ENCODE measurements at regions of chr12 and their contacts with region 1.

Region 1: DNA sequence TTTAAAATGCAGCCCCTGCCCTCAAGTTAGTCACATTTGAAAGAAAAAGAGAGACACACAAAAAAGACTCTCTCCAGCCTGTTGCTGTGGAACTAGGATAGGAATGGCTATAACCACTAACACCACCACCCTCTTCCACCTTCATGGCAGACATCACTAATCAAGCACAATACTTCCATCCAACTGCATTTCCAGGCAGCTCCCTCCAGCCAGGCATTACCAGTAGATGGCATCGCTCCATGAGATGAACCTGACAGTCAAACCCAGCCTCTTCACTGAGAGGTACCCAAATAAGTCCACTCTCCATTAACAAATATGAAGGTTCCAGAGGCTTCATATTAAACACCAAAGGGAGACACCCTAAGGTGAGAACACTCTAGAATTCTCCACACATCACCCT is 24.4 kb downstream of the SLC8B1 start:
- DNase-seq: no peak
- H3K4me3 Mint-ChIP-seq: no peak overlapping the region
- H3K27ac Mint-ChIP-seq: no peak overlapping the region
- H3K4me1 Mint-ChIP-seq: peaks cover 3% of the 10 kb centered on the region
- H3K27me3 Mint-ChIP-seq: no peaks in the 10 kb centered on the region

Region 2: GRCh38 chr12:113299619-113300237 is 10.8 kb before region 1 on chr12:
- intact Hi-C with region 1: no loop called
- DNase-seq: no peak
- H3K4me3 Mint-ChIP-seq: no peak overlapping the region
- H3K27ac Mint-ChIP-seq: peak overlapping the region; percentile 8
- H3K4me1 Mint-ChIP-seq: peaks cover 17% of the 10 kb centered on the region
- H3K27me3 Mint-ChIP-seq: no peaks in the 10 kb centered on the region

Region 3: DNA sequence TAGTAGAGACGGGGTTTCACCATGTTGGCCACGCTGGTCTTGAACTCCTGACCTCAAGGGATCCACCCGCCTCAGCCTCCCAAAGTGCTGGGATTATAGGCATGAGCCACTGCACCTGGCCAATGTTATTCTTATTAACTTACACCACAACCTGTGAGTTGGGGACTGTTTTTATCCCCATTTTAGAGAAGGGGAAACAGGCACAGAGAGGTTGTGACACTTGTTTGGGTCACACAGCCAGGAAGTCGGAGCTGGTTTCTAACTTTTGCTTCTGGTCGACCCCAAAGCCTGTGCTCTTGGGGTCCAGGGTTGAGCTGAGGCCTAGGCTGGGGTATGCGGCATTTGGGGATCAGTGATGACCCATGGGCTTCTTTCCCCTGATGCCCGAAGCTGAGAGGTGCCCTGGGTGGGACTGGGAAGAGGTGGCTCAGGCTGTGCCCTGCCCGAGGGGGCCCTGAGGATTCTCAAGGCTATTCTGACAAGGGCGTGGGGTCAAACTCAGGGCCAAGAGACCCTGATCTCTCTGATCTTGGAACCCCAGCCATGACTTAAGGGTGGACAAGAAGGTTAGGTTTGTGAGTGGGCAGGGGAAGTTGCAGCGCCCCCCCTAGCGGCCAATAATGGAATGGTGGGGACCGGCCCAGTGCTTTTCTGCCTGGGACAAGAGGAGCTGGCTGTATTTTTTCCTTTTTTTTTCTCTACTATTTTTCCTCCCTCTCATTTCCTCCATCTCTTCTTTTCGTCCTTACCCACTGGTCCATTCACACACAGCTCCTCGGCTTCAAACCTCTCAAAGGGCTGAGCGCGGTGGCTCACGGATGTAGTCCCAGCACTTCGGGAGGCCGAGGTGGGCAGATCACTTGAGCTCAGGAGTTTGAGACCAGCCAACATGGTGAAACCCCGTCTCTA is 114.7 kb after region 1 on chr12:
- intact Hi-C with region 1: loop called (anchors 2 kb)
- DNase-seq: peak; percentile 86
- H3K4me3 Mint-ChIP-seq: no peak overlapping the region
- H3K27ac Mint-ChIP-seq: no peak overlapping the region
- H3K4me1 Mint-ChIP-seq: peaks cover 10% of the 10 kb centered on the region
- H3K27me3 Mint-ChIP-seq: peaks cover 9% of the 10 kb centered on the region

Region 4: DNA sequence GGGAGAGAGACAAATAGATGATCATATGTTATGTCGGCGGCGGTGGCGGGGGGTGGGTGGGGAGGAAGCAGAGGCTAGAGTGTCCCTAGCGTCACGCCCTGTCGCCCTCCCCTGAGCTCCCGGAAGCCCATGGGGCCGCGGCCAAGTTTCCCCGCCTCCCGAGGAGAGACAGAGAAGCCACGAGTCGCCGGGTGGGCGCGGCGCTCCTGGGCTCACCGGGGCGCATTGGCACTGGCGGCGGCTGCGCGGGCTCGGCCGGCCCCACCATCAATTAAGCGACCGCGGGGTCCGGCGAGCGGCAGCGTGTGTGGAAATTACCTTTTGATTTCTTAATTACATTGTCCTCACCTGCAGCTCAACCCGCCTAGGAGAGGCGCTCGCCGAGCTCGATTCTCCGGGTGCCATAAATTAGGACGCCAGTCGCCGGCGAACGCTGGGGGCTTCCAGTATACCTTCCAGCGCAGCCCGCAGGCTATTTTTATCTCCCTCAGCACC is 281.0 kb after region 1 on chr12:
- intact Hi-C with region 1: no loop called
- DNase-seq: peak; percentile 55
- H3K4me3 Mint-ChIP-seq: peak overlapping the region; percentile 46
- H3K27ac Mint-ChIP-seq: no peak overlapping the region
- H3K4me1 Mint-ChIP-seq: no peaks in the 10 kb centered on the region
- H3K27me3 Mint-ChIP-seq: peaks cover 14% of the 10 kb centered on the region